Naive thymus-derived CD4-positive, alpha-beta T cell (primary cell): ENCODE measurements at regions of chr6 and their contacts with region 1.

Region 1: DNA sequence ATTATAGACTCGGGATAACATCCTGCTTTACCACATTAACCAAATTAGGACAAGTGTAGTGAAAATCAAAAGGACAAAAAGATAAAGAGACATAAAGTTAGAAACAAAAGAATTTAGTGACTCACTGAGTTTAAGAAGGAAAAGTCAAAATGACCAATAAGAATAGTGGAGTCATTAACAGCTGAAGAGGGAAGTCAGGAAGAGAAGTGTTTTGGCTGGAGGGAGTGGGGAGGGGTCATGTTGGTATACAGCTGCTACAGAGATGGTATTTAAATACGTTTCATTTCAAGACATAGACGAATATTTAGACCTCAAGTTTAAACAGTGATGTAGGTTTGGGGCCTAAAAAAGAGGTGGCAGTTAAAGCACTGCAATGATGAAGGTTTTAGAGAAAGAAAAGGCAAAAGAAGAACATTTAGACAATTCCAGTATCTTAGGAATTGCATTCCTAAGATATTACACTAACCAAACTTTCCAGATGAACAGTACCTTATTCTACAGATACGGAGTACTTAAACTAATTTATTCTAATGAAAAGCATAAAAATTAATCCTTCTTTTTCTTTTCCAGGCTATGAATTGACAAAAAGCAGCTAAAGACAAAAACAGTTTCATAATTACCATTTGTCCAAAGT is 10.6 kb downstream of the FKBP5 start:
- DNase-seq: no peak
- ATAC-seq: no peak
- H3K4me3 ChIP-seq: no peak overlapping the region
- H3K4me3 Mint-ChIP-seq: peak overlapping the region; percentile 0 to 74 (median 66)
- H3K27ac ChIP-seq: peak overlapping the region; percentile 43
- H3K27ac Mint-ChIP-seq: peak overlapping the region in 7 of 9 donors; percentile 1 to 90 (median 77)
- H3K4me1 ChIP-seq: peaks cover 25 to 72% of the 10 kb centered on the region in 2 donors
- H3K4me1 Mint-ChIP-seq: peaks cover 47 to 100% (median 91%) of the 10 kb centered on the region in 7 donors
- H3K27me3 ChIP-seq: no peaks in the 10 kb centered on the region
- H3K27me3 Mint-ChIP-seq: no peaks in the 10 kb centered on the region

Region 2: GRCh38 chr6:35634316-35634715 is 43.8 kb before region 1 on chr6:
- CTCF ChIA-PET with region 1: no interaction called
- POLR2A ChIA-PET with region 1: interaction called, 3 read pairs
- intact Hi-C with region 1: loop called in 1 of 2 experiments (anchors 5 kb)
- DNase-seq: no peak
- ATAC-seq: no peak
- H3K4me3 ChIP-seq: no peak overlapping the region
- H3K4me3 Mint-ChIP-seq: peak overlapping the region in 2 of 10 donors; percentile 4 to 29
- H3K27ac ChIP-seq: peak overlapping the region; percentile 53
- H3K27ac Mint-ChIP-seq: peak overlapping the region; percentile 21 to 90 (median 77)
- H3K4me1 ChIP-seq: peaks cover 0 to 29% of the 10 kb centered on the region in 2 donors
- H3K4me1 Mint-ChIP-seq: peaks cover 12 to 69% (median 60%) of the 10 kb centered on the region in 7 donors
- H3K27me3 ChIP-seq: no peaks in the 10 kb centered on the region
- H3K27me3 Mint-ChIP-seq: no peaks in the 10 kb centered on the region